B cell (primary cell): ENCODE measurements at regions of chrX and their contacts with region 1.

Region 1: GRCh38 chrX:129480889-129481288 is 42.4 kb downstream of the SMARCA1 start:
- DNase-seq: no peak
- ATAC-seq: no peak
- H3K4me3 ChIP-seq: no peak overlapping the region
- H3K4me3 Mint-ChIP-seq: no peak overlapping the region
- H3K27ac ChIP-seq: no peak overlapping the region
- H3K27ac Mint-ChIP-seq: no peak overlapping the region
- H3K4me1 ChIP-seq: no peaks in the 10 kb centered on the region
- H3K4me1 Mint-ChIP-seq: no peaks in the 10 kb centered on the region
- H3K27me3 ChIP-seq: no peaks in the 10 kb centered on the region
- H3K27me3 Mint-ChIP-seq: no peaks in the 10 kb centered on the region
- CTCF ChIP-seq: no peak

Region 2: GRCh38 chrX:129427267-129427666 is 53.6 kb before region 1 on chrX:
- CTCF ChIA-PET with region 1: no interaction called
- POLR2A ChIA-PET with region 1: no interaction called
- intact Hi-C with region 1: no loop called
- DNase-seq: no peak
- ATAC-seq: no peak
- H3K4me3 ChIP-seq: no peak overlapping the region
- H3K4me3 Mint-ChIP-seq: no peak overlapping the region
- H3K27ac ChIP-seq: no peak overlapping the region
- H3K27ac Mint-ChIP-seq: no peak overlapping the region
- H3K4me1 ChIP-seq: no peaks in the 10 kb centered on the region
- H3K4me1 Mint-ChIP-seq: no peaks in the 10 kb centered on the region
- H3K27me3 ChIP-seq: no peaks in the 10 kb centered on the region
- H3K27me3 Mint-ChIP-seq: peaks cover 3% of the 10 kb centered on the region
- CTCF ChIP-seq: no peak

Region 3: DNA sequence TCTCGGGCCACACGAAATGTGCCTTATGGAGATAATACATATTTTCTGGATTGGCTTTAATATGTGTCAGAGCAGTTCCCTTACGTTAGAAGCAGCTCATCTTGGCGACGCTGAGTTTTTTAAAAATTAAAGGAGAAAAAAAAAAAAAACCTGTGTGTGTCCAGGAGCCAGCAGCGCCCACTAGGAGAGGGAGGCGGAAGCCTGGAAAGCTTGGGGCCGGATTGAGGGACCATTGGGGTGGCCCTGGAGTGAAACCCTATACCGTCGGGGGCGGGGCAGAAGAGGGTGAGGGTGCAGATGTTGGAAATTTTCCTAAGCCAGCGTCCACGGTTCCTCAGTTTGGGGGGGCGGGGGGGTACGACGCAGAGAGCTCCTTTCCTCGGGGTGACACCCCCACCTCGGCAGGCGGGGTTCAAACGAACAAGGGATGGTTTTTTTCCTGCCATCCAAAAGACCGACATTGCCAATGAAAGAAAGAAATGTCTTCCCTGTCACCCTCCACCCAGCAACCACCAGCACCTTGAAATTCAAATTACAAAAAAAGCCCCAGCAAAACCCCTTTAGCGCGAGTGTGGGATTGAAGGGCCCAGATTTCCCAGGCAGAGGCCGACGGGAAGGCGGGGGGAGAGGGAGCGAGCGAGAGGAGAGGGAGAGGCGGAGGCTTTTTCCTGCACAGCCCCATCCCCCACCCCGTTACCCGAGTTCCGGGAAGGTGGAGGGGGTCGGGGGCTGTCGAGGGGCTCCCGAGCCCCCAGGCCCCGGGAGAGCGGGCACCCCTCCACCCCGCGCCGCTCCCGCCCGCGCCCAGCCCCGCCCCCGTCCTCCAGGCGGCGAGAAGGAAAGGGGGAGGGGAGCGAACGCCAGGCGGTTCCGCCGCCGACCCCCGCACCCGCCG is 41.5 kb after region 1 on chrX:
- CTCF ChIA-PET with region 1: no interaction called
- POLR2A ChIA-PET with region 1: no interaction called
- intact Hi-C with region 1: loop called (anchors 1 kb)
- DNase-seq: peak; percentile 12
- ATAC-seq: peak; percentile 21
- H3K4me3 ChIP-seq: peak overlapping the region in 4 of 5 experiments; percentile 49 to 64 (median 58)
- H3K4me3 Mint-ChIP-seq: peak overlapping the region; percentile 84
- H3K27ac ChIP-seq: no peak overlapping the region
- H3K27ac Mint-ChIP-seq: no peak overlapping the region
- H3K4me1 ChIP-seq: peaks cover 4 to 6% of the 10 kb centered on the region in 2 donors
- H3K4me1 Mint-ChIP-seq: peaks cover 8% of the 10 kb centered on the region
- H3K27me3 ChIP-seq: peaks cover 0 to 12% (median 4%) of the 10 kb centered on the region in 4 experiments
- H3K27me3 Mint-ChIP-seq: peaks cover 20% of the 10 kb centered on the region
- CTCF ChIP-seq: no peak